Heart left ventricle (tissue), 16 donors: ENCODE measurements at regions of chr1 and their contacts with region 1.

Region 1: GRCh38 chr1:2525920-2526823 is at the start of gene PANK4:
- DNase-seq: peak; percentile 94 to 97 (median 94)
- ATAC-seq: peak; percentile 87 to 90 (median 88)
- H3K4me3 ChIP-seq: peak within 1 kb of the TSS; percentile 72 to 97 (median 86)
- H3K27ac ChIP-seq: peak within 1 kb of the TSS; percentile 61 to 92 (median 86)
- H3K4me1 ChIP-seq: peaks cover 29 to 76% (median 68%) of the 10 kb centered on the region in 12 donors
- H3K27me3 ChIP-seq: peaks cover 0 to 31% (median 0%) of the 10 kb centered on the region in 9 donors
- CTCF ChIP-seq: peak in 3 of 12 donors; percentile 17 to 38 (median 20)
- POLR2A ChIP-seq: peak; percentile 68 to 75
- total RNA-seq, gene PANK4: 27.2 to 43.0 (median 36.6) TPM

Region 2: DNA sequence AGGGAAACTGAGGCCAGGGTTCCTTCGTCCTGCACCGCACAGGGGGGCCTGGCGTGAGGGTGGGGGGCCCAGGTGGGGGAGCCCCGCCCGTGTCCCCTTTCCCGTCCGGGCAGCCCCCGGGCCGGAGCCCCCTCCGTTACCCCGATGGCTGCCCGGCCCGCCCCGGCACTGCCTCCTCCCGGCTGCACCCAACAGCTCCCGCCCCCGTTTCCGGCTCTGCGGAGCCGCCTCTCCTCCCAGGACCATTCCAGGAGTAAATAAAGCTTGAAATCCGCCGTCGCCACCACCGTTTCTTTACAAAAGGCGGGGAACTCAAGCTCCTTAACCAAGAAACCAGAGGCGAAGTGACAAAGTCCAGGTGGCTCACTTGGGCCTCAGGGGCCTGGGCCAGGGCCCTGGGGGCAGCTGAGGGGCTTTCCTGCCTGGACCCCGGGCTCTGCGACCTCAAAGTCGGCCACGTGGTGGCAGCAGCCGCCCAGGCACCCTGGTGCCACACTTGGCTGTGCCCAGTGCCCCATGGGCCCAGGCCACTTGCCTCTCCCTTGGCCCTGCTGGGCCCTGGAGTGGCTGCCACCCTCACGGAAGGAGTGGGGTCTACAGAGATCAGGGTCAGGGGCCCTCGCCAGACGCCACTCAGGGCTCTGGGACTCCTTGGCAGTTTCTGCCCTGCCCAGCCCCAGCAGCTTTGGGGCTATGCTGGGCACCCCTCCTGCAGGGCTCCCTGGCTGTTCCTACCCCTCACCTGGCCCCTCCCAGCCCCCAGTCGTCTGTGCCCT is 331.1 kb before region 1 on chr1:
- intact Hi-C with region 1: loop called in 3 of 10 experiments (anchors 5 to 10 kb)
- DNase-seq: peak; percentile 92 to 95 (median 94)
- ATAC-seq: peak; percentile 62 to 79 (median 76)
- H3K4me3 ChIP-seq: peak overlapping the region; percentile 51 to 88 (median 73)
- H3K27ac ChIP-seq: peak overlapping the region; percentile 82 to 98 (median 95)
- H3K4me1 ChIP-seq: peaks cover 6 to 67% (median 54%) of the 10 kb centered on the region in 12 donors
- H3K27me3 ChIP-seq: no peaks in the 10 kb centered on the region
- CTCF ChIP-seq: peak; percentile 85 to 98 (median 96)
- POLR2A ChIP-seq: peak in 1 of 2 donors; percentile 31